Tibial artery (tissue), 4 donors: ENCODE measurements at regions of chr6 and their contacts with region 1.

Region 1: GRCh38 chr6:78947962-78948361 is 80.6 kb downstream of the IRAK1BP1 start:
- DNase-seq: no peak
- H3K4me3 ChIP-seq: no peak overlapping the region
- H3K27ac ChIP-seq: no peak overlapping the region
- H3K4me1 ChIP-seq: no peaks in the 10 kb centered on the region
- H3K27me3 ChIP-seq: no peaks in the 10 kb centered on the region
- CTCF ChIP-seq: no peak

Region 2: DNA sequence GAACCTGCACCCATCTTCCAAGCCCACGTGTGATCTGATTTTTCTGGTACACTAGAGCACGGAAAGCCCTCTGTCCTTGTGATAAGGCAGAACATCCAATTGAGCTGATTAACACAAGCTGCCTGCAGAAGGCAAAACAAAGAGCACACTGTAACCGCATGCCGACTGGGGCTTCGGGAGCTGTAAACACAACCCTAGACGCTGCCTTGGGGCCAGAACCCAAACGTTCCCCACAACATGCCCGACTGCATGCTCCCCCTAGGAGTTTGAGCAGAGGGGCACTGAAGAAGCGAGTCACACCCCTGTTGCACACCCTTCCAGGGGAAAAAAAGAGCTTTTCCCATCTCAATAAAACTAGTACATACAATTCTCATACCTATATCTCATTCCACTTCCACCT is 1955.4 kb before region 1 on chr6:
- intact Hi-C with region 1: loop called (anchors 10 kb)
- DNase-seq: no peak
- H3K4me3 ChIP-seq: no peak overlapping the region
- H3K27ac ChIP-seq: no peak overlapping the region
- H3K4me1 ChIP-seq: no peaks in the 10 kb centered on the region
- H3K27me3 ChIP-seq: no peaks in the 10 kb centered on the region
- CTCF ChIP-seq: no peak

Region 3: DNA sequence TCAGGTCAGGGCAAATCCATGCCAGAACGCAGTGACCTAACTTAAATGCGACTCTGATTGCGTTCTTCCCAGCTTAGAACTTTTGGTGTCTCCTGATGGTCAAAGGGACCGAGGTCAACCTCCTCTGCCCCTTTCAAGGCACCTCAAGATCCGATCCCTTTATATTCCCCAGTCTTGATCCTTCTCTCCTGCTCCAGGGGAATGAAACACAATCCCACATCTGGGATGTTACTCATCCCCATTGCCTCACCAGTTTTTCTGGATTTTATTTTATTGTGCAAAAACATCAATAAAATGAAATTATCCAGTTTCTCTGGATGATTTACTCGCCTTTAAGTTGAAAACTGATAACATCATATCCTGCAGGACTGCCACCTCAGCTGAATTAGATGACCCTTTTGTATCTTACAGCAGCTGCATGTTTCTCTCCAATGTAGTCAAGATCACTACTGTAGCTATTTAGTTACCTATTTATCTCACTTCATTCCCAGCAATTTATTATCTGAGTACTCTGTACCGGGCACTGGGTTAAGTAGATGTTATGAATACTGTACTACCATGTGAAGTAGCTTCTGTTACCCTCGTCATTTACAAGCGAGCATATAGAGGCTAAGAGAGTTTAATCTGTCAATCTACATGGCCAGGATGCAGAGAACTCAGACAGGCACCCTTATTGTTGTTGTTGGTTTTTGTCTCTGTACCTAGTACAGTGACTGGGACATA is 36.6 kb before region 1 on chr6:
- intact Hi-C with region 1: no loop called
- DNase-seq: no peak
- H3K4me3 ChIP-seq: no peak overlapping the region
- H3K27ac ChIP-seq: no peak overlapping the region
- H3K4me1 ChIP-seq: no peaks in the 10 kb centered on the region
- H3K27me3 ChIP-seq: no peaks in the 10 kb centered on the region
- CTCF ChIP-seq: no peak